Activated CD4-positive, alpha-beta memory T cell treated with anti-CD3 and anti-CD28 coated beads, Interleukin-2, amount 10 ng/mL, durations not matched to agents 7 days and 5 days (primary cell): ENCODE measurements at regions of chr17 and their contacts with region 1.

Region 1: DNA sequence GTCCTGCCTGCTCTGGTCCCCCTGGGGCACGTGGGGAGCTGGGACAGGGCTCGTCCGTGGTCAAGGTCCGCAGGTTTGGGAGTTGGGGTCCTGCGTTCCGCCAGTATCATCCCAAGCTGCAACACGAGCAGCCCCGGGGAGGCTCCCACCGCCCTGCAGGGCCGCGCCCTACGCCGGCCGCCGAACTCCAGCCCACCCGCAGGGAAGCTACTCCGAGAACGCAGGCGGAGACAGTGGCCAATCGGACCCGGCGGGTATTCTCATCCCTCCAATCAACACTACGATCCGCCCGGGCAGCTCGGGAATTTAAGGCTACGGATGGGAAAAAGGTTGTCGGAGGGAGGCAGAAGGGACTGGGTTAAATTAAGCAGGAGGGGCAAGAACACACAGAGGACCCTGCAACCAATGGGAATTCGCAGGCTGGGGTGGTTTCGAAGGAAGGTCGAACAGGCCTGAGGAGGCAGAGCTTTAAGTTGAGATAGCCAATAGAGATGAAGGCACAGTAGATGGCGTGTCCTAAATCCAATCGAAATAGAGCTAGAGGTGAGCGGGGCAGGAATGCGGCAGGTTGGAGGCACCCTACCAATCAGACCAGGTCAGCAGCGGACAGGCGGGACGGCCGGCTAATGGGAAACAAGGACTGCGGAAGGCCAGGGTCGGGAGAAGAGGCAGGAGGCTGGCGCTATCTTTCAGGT is 626 bp downstream of the SPAG7 start:
- DNase-seq: peak; percentile 97
- H3K4me3 Mint-ChIP-seq: no peak overlapping the region
- H3K27ac Mint-ChIP-seq: no peak overlapping the region
- H3K4me1 Mint-ChIP-seq: peaks cover 25% of the 10 kb centered on the region
- H3K27me3 Mint-ChIP-seq: no peaks in the 10 kb centered on the region

Region 2: GRCh38 chr17:4881761-4882555 is 85.0 kb before region 1 on chr17:
- CTCF ChIA-PET with region 1: no interaction called
- POLR2A ChIA-PET with region 1: no interaction called
- DNase-seq: peak; percentile 66
- H3K4me3 Mint-ChIP-seq: no peak overlapping the region
- H3K27ac Mint-ChIP-seq: no peak overlapping the region
- H3K4me1 Mint-ChIP-seq: no peaks in the 10 kb centered on the region
- H3K27me3 Mint-ChIP-seq: no peaks in the 10 kb centered on the region

Region 3: GRCh38 chr17:4908301-4908700 is 58.7 kb before region 1 on chr17:
- CTCF ChIA-PET with region 1: interaction called, 18 read pairs
- POLR2A ChIA-PET with region 1: interaction called, 9 read pairs
- DNase-seq: no peak
- H3K4me3 Mint-ChIP-seq: no peak overlapping the region
- H3K27ac Mint-ChIP-seq: no peak overlapping the region
- H3K4me1 Mint-ChIP-seq: peaks cover 7% of the 10 kb centered on the region
- H3K27me3 Mint-ChIP-seq: peaks cover 13% of the 10 kb centered on the region

Region 4: GRCh38 chr17:4948931-4949320 is 18.1 kb before region 1 on chr17:
- CTCF ChIA-PET with region 1: interaction called, 17 read pairs
- POLR2A ChIA-PET with region 1: interaction called, 711 read pairs
- DNase-seq: peak; percentile 83
- H3K4me3 Mint-ChIP-seq: peak overlapping the region; percentile 96
- H3K27ac Mint-ChIP-seq: peak overlapping the region; percentile 100
- H3K4me1 Mint-ChIP-seq: peaks cover 44% of the 10 kb centered on the region
- H3K27me3 Mint-ChIP-seq: no peaks in the 10 kb centered on the region

Region 5: DNA sequence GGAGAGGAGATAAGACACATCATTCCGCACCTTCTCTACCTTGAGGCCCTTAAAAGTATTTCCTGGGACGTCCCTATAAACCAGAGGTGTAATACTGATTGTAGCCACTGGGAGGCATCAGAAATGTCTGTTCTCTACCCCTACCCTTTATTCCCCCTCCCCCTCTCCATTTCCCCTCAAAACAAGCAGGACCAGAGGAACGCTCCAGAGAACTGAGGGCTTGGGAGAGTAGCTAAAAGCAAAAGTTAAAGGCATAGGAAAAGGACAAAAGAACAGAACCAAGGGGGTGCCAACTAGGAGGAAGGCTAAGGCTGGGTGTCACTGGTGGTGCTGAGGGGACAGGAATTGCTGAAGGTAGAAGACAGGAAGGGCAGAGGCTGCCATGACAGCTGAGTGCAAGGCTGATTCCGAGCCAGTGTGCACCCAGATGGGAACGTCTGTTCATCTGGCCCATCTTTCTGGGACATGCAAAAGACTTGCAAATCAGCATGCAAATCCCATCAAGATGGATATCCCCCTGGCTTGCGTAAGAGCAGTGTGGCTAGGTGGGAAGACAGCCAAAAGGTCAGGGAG is 13.7 kb after region 1 on chr17:
- CTCF ChIA-PET with region 1: interaction called, 22 read pairs
- POLR2A ChIA-PET with region 1: interaction called, 78 read pairs
- DNase-seq: peak; percentile 45
- H3K4me3 Mint-ChIP-seq: no peak overlapping the region
- H3K27ac Mint-ChIP-seq: peak overlapping the region; percentile 60
- H3K4me1 Mint-ChIP-seq: peaks cover 23% of the 10 kb centered on the region
- H3K27me3 Mint-ChIP-seq: no peaks in the 10 kb centered on the region

Region 6: GRCh38 chr17:4997302-4998026 is 30.5 kb after region 1 on chr17 and contains the starts of genes INCA1 and KIF1C:
- CTCF ChIA-PET with region 1: interaction called, 5 read pairs
- POLR2A ChIA-PET with region 1: interaction called, 25 read pairs
- DNase-seq: peak; percentile 92
- H3K4me3 Mint-ChIP-seq: peak within 1 kb of the TSS; percentile 79
- H3K27ac Mint-ChIP-seq: peak within 1 kb of the TSS; percentile 52
- H3K4me1 Mint-ChIP-seq: peaks cover 26% of the 10 kb centered on the region
- H3K27me3 Mint-ChIP-seq: no peaks in the 10 kb centered on the region
- total RNA-seq, gene INCA1: 0.25 TPM in 1 of 2 experiments, not detected in the other
- total RNA-seq, gene KIF1C: 37.4 to 38.5 TPM

Region 7: DNA sequence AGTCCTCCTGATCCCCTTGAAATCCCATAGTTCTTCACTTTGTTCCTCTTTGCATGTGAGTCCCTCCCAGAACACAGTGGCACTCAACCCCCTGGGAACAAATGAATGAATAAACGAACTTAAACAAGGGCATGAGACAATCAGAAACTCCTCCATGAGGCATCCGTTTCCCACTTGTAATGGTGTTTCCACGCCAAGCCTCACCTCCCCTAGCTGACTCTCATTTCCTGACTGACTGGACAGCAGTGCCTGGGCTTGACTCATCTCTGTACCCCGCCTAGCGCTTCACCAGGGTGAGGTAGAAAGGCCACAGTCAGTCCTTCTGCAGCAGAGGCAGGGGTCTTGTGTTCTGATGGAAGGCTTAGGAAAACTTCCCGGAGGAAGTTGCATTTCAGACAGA is 44.9 kb after region 1 on chr17:
- CTCF ChIA-PET with region 1: no interaction called
- POLR2A ChIA-PET with region 1: no interaction called
- DNase-seq: peak; percentile 56
- H3K4me3 Mint-ChIP-seq: no peak overlapping the region
- H3K27ac Mint-ChIP-seq: peak overlapping the region; percentile 61
- H3K4me1 Mint-ChIP-seq: peaks cover 25% of the 10 kb centered on the region
- H3K27me3 Mint-ChIP-seq: no peaks in the 10 kb centered on the region